PC-9 (cell line): ENCODE measurements at regions of chrX and their contacts with region 1.

Region 1: DNA sequence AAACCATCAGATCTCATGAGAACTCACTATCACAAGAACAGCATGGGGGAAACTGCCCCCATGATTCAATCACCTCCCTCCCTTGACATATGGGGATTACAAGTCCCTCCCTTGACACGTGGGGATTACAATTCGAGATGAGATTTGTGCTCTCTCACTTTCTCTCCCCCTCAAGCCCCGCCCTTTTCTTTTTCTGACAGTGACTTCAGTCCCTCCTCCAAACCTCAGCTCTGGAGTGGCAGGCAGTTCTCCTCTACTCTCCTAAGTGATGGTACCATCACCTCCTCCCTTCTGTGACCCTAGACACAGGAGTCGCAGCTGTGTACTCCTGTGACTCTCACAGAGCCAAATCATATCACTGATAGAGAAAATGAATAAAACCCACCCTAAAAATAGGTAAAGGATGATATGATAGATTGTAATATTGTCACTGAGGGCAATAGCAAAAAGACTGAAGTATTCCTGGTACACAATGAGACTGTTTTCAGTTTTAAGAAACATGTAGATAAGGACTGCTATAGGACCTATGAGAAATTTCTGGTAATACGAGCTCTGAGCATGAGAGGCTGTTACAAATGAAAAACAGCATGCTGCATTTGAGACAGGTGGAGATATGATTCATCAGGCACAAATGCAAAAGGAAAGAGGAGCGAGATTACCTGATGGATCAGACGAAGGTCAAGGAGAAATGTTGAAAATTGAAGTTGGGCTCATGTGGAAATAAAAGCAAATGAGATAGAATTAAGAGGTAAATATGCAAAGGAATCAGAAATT is 101.2 kb upstream of the CBLL2 start:
- DNase-seq: peak in 1 of 2 experiments; percentile 62
- H3K4me3 ChIP-seq: no peak overlapping the region
- H3K27ac ChIP-seq: peak overlapping the region; percentile 39
- H3K4me1 ChIP-seq: peaks cover 8% of the 10 kb centered on the region
- H3K27me3 ChIP-seq: no peaks in the 10 kb centered on the region
- CTCF ChIP-seq: no peak

Region 2: DNA sequence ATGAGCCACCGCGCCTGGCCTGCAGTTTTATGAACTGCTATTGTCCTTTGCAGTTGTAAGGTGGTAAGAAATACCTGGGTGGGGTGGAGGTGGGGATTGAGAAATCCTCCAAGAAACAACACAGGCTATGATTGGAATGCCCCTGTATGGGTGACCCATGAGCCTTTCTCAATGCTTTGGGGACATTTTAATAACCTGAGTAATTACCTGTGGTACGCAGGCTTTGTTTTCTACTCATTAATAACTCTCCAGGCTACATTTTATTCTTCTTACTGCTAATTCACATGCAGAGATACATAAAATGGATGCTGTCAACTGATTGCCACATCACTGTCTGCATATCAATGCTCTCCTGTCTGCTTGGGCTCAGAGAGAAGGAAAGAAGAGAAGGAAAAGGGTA is 97.6 kb before region 1 on chrX:
- CTCF ChIA-PET with region 1: no interaction called
- POLR2A ChIA-PET with region 1: no interaction called
- intact Hi-C with region 1: loop called (anchors 5 kb)
- DNase-seq: peak; percentile 65 to 95
- H3K4me3 ChIP-seq: no peak overlapping the region
- H3K27ac ChIP-seq: peak overlapping the region; percentile 73
- H3K4me1 ChIP-seq: peaks cover 19% of the 10 kb centered on the region
- H3K27me3 ChIP-seq: no peaks in the 10 kb centered on the region
- CTCF ChIP-seq: no peak